Activated CD4-positive, alpha-beta T cell treated with anti-CD3 and anti-CD28 coated beads for 36 hours (primary cell): ENCODE measurements at regions of chr1 and their contacts with region 1.

Region 1: DNA sequence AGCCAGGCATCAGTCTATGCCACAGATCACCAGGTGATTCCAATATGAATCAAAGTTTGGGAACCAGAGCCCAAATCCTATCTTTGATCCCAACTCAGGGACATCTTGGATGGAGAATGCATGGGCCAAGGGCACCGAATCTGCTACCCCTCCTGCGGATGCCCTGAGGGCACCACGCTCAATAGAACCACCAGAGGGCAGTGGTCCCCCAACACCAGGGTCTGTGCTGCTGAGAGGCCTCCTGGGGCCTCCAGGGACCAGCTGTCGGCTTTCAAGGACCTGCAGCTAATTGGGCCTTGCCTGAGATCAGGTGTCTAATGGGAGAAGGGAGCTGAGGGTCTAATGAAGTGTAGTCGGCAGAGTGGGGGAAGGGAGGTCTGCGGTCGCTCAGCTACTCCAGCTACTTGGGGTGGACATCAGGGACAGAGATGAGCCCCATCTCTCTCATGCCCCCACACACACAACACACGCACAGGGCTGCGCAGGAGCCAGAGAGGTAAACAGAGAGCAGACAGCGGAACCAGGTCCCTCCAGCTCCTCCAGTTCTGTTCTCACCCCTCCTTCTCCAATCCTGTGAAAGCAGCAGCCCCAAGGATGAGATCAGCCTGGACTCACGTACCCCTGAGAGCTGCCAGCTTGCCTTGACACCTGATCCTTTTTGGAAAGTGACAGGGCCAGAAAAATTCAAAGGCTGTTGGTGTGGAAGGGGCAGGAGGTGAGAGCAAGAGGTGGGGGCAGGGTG is 34.9 kb upstream of the PPP1R15B start:
- DNase-seq: peak; percentile 86
- ATAC-seq: peak; percentile 82
- H3K4me3 Mint-ChIP-seq: no peak overlapping the region
- H3K27ac Mint-ChIP-seq: peak overlapping the region; percentile 86
- H3K4me1 Mint-ChIP-seq: peaks cover 49% of the 10 kb centered on the region
- H3K27me3 Mint-ChIP-seq: no peaks in the 10 kb centered on the region

Region 2: GRCh38 chr1:204207136-204207616 is 239.4 kb before region 1 on chr1:
- CTCF ChIA-PET with region 1: no interaction called
- POLR2A ChIA-PET with region 1: no interaction called
- intact Hi-C with region 1: no loop called
- DNase-seq: peak; percentile 89
- ATAC-seq: peak; percentile 98
- H3K4me3 Mint-ChIP-seq: no peak overlapping the region
- H3K27ac Mint-ChIP-seq: no peak overlapping the region
- H3K4me1 Mint-ChIP-seq: peaks cover 12% of the 10 kb centered on the region
- H3K27me3 Mint-ChIP-seq: peaks cover 26% of the 10 kb centered on the region

Region 3: DNA sequence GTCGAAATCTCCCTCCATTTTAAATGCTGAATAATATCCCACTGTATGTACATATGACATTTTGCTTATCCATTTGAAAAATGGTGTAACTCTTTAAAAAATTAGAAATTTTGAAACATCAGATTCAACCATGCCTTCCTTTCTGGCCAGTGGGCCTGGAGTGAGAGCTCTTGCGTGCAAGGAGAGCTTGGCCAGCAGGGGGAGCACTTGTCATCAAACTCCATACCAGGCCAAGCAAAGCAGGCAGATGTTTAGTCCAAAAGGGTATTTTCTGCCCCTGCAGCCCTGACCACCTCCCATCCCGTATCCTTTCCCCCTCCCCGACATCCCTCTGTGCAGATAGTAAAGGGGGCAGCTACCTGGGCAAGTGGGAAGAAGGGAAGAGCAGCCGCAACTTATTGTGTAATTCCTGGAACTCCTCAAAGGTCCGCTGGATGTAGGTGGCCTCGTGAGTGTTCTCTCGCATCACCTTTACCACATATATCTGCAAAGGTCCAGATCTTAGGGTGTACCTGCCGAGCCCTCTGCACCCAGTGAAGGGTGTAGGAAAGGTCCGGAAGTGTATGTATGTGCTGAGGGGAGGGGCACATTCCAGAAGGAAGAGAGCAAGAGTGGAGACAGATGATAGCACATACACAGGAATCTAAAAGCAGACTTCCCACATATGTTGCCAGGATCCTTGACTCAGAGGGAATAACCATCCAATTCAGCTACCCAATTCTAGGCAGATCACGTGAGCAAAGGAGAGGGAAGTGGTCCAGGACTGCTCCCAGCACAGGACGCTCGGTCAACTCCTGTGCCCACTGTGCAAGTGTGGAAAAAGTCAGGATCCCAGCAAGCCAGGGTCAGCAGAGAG is 15.0 kb before region 1 on chr1:
- CTCF ChIA-PET with region 1: interaction called, 71 read pairs
- POLR2A ChIA-PET with region 1: no interaction called
- intact Hi-C with region 1: no loop called
- DNase-seq: peak; percentile 91
- ATAC-seq: peak; percentile 85
- H3K4me3 Mint-ChIP-seq: no peak overlapping the region
- H3K27ac Mint-ChIP-seq: peak overlapping the region; percentile 45
- H3K4me1 Mint-ChIP-seq: peaks cover 10% of the 10 kb centered on the region
- H3K27me3 Mint-ChIP-seq: no peaks in the 10 kb centered on the region

Region 4: GRCh38 chr1:204480515-204480914 is 34.0 kb after region 1 on chr1:
- CTCF ChIA-PET with region 1: interaction called, 13 read pairs
- POLR2A ChIA-PET with region 1: no interaction called
- intact Hi-C with region 1: no loop called
- DNase-seq: peak; percentile 33
- ATAC-seq: peak; percentile 67
- H3K4me3 Mint-ChIP-seq: no peak overlapping the region
- H3K27ac Mint-ChIP-seq: no peak overlapping the region
- H3K4me1 Mint-ChIP-seq: peaks cover 52% of the 10 kb centered on the region
- H3K27me3 Mint-ChIP-seq: no peaks in the 10 kb centered on the region

Region 5: DNA sequence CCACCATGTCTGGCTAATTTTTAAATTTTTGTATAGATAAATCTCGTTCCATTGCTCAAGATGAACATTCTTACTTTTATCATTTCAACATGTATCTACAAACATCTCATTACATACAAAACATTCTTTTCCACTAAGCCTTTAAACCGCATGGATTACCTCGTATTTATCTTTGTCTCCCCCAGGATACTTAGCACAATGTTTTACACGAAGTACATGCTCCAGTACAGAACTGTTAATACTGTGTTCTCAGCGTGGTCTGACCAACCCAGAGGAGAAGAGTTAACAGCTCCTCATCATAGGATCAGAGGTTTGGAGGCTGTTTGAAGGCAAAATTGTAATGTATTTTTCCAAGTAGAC is 40.7 kb after region 1 on chr1:
- CTCF ChIA-PET with region 1: interaction called, 910 read pairs
- POLR2A ChIA-PET with region 1: interaction called, 3 read pairs
- intact Hi-C with region 1: no loop called
- DNase-seq: no peak
- ATAC-seq: no peak
- H3K4me3 Mint-ChIP-seq: no peak overlapping the region
- H3K27ac Mint-ChIP-seq: no peak overlapping the region
- H3K4me1 Mint-ChIP-seq: peaks cover 40% of the 10 kb centered on the region
- H3K27me3 Mint-ChIP-seq: no peaks in the 10 kb centered on the region